Posterior vena cava (tissue), 2 donors: ENCODE measurements at regions of chr16 and their contacts with region 1.

Region 1: DNA sequence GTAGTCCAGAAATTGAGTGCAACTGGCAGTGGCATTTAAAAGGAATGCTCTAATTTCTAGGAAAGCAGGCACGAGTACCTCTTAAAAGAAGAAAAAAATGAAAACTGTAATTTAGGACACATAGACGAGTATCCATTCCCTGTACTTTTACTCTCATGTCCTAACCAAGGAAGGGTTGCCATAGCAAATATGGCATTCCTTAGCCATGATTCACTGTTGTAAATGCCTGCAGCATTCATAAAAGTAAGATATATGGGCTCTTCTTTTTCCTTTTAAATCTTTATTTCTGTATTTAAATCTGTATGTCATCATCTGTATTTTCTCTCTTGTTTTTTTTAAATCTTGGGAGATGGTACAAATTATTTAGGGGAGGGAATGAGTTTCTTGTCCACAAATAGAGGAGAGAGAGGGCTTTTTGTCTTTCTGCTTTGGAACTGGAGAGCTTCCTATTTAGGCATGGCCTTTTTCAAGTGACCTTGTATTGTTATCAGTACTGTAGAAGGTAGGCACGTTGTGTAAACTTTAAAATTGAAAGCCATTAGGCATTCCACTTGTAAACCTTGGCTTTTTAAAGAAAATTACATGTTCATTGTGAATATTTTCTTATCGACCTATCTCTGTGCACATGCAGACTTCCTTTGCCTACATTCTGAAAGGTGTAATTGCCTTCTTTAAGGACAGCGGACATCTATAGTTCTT is 50.0 kb downstream of the TENT4B start:
- DNase-seq: no peak

Region 2: GRCh38 chr16:50152807-50153452 is 50.1 kb before region 1 on chr16 and contains the start of gene TENT4B:
- intact Hi-C with region 1: loop called in 1 of 2 experiments (anchors 5 kb)
- DNase-seq: peak; percentile 96
- total RNA-seq, gene TENT4B: 13.4 to 15.0 TPM